ENCODE measurements at regions of chr7 and their contacts with region 1.

Region 1: DNA sequence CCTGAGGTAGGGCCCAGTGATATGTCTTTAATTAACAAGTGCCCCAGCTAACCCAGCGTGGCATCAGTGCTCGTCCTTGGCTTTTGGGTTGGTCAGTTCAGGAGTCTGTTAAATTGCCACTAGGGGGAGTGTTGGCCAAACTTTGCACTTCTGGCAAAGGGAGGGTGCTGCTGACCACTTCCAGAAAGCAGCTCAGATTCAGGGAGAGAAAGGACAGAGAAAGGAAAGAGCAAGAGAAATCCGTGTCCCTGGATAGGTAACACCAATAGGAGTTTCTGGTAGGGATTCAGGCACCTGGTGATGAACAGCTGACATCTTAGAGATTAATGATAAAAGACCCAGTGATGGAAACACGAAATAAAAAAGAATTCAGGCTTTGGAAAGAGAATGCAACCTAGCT is 243.1 kb upstream of the AOAH start:
- DNase-seq: no peak
- ATAC-seq: peak; percentile 98
- H3K4me3 ChIP-seq: no peak overlapping the region
- H3K27ac ChIP-seq: no peak overlapping the region
- H3K4me1 ChIP-seq: no peaks in the 10 kb centered on the region
- H3K27me3 ChIP-seq: no peaks in the 10 kb centered on the region
- CTCF ChIP-seq: peak; percentile 51 to 70 (median 53)
- EP300 ChIP-seq: no peak
- POLR2A ChIP-seq: no peak
- RAD21 ChIP-seq: no peak

Region 2: DNA sequence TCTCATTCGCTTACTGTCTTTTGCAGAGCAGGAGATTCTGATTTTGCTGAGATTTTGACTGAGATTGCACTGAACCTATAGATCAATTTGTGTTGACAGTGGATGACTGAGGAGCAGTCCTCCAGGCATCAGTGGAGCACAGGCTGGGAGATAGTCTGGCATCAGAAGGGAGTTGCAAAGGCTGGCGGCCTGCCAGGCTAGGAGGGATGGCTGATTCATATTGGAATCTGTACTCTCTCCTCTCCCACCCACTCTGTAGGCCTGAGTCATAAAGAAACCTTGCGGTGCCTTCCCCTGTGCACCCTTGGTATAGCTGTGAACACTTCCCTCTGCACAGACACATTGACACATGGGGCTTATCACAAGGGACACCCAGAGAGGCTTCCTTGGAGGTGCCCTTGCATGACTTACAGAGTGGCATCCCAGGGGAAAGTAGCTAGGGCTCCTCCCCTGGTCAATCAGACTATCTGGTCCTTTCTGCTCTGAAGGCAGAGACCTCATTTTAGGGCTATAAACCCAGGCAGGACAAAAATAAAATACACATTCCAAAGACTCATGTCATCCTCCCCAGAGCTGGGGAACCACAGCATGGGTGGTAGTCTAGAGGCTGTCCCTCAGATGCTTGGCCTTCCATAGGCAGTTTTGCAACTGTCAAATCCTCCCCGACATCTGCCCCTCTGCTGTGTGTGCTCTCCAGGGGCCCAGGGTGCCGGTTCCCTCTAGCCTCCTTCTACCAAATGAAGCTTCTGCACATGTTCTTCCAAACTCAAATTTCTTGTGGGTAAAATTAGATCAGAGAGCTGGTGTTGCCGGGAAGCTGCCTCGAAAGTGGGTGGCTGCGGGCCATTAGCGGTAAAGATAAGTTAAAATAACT is 851.7 kb before region 1 on chr7:
- CTCF ChIA-PET with region 1: no interaction called
- POLR2A ChIA-PET with region 1: no interaction called
- RAD21 ChIA-PET with region 1: no interaction called
- SMC1A ChIA-PET with region 1: no interaction called
- in situ Hi-C with region 1: no loop called
- intact Hi-C with region 1: no loop called
- DNase-seq: peak; percentile 79
- ATAC-seq: peak; percentile 100
- H3K4me3 ChIP-seq: no peak overlapping the region
- H3K27ac ChIP-seq: no peak overlapping the region
- H3K4me1 ChIP-seq: peaks cover 11% of the 10 kb centered on the region
- H3K27me3 ChIP-seq: peaks cover 0 to 6% of the 10 kb centered on the region in 2 experiments; a peak in 3 of 4 replicates
- CTCF ChIP-seq: no peak
- EP300 ChIP-seq: peak; percentile 44 to 93; a peak in 3 of 4 replicates
- POLR2A ChIP-seq: no peak
- RAD21 ChIP-seq: no peak

Region 3: DNA sequence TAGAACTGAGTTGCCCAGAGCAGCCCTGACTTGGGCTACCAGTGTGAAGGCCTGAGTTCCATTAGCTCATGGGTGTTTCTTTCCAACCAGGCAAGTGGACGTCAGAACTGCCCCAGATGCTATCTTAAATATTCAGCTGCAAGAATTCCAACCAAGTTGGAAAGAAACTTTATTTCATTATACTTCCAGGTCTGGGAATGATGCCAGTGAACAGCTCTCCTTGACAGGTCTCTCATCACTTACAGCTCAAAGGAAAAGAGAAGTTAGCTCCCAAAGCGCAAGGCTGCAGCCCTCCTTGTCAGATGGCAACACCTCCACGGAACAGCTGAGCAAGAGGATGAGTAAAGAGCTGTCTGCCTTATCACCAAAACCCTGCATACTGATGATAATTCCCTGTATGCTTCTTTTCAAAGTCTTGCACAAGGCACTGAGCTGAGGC is 12.4 kb after region 1 on chr7:
- CTCF ChIA-PET with region 1: interaction called, 53 read pairs
- POLR2A ChIA-PET with region 1: interaction called, 3 read pairs
- RAD21 ChIA-PET with region 1: interaction called, 9 read pairs
- SMC1A ChIA-PET with region 1: interaction called, 50 read pairs
- in situ Hi-C with region 1: no loop called
- intact Hi-C with region 1: no loop called
- DNase-seq: no peak
- ATAC-seq: no peak
- H3K4me3 ChIP-seq: no peak overlapping the region
- H3K27ac ChIP-seq: no peak overlapping the region
- H3K4me1 ChIP-seq: no peaks in the 10 kb centered on the region
- H3K27me3 ChIP-seq: no peaks in the 10 kb centered on the region
- CTCF ChIP-seq: no peak
- EP300 ChIP-seq: no peak
- POLR2A ChIP-seq: no peak
- RAD21 ChIP-seq: no peak